Activated CD4-positive, alpha-beta T cell treated with anti-CD3 and anti-CD28 coated beads for 36 hours (primary cell): ENCODE measurements at regions of chr11 and their contacts with region 1.

Region 1: DNA sequence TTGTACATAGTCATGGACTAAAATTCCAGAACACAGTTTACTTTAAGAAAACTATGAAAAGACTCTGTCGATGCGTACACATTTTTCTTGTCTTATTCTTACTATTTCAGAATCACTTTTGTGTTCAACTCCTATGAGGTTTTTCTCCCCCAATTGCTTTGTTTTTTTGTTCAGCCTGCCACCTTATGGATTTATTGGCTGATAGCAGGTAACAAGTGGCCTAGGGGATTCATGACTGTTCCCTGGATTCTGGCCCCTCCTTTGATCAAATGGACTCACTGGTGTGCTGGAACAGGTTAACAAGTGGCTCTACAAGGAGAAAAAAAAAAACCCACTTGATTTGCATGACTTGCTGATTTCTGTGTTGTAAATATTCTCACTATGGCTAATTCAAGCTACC is 10.6 kb downstream of the MMP20 start:
- DNase-seq: no peak
- ATAC-seq: no peak
- H3K4me3 Mint-ChIP-seq: no peak overlapping the region
- H3K27ac Mint-ChIP-seq: no peak overlapping the region
- H3K4me1 Mint-ChIP-seq: peaks cover 13% of the 10 kb centered on the region
- H3K27me3 Mint-ChIP-seq: no peaks in the 10 kb centered on the region

Region 2: GRCh38 chr11:101436511-101437142 is 1177.9 kb before region 1 on chr11:
- CTCF ChIA-PET with region 1: no interaction called
- POLR2A ChIA-PET with region 1: no interaction called
- intact Hi-C with region 1: no loop called
- DNase-seq: peak; percentile 39
- ATAC-seq: no peak
- H3K4me3 Mint-ChIP-seq: no peak overlapping the region
- H3K27ac Mint-ChIP-seq: no peak overlapping the region
- H3K4me1 Mint-ChIP-seq: no peaks in the 10 kb centered on the region
- H3K27me3 Mint-ChIP-seq: no peaks in the 10 kb centered on the region

Region 3: DNA sequence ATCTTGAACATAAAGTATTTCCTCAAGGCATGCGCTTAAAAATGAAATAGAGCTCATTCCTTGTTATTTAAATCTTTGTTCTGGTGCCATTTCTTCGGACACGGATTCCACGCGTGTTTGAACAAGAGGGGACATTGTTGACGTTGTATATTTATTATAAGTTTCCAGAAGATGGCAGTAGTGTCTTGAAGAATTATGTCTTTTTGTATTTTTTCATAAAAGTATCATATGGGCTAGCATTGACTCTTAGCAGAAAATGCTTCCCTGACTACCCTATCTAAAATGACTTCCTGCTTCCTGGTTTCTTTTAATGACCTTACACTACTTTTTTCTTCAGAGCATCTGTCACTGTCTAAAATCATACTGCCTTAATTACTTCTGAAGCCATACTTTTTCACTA is 247.1 kb before region 1 on chr11:
- CTCF ChIA-PET with region 1: interaction called, 10 read pairs
- POLR2A ChIA-PET with region 1: no interaction called
- intact Hi-C with region 1: loop called in 1 of 2 experiments (anchors 1 kb)
- DNase-seq: no peak
- ATAC-seq: peak; percentile 50
- H3K4me3 Mint-ChIP-seq: no peak overlapping the region
- H3K27ac Mint-ChIP-seq: no peak overlapping the region
- H3K4me1 Mint-ChIP-seq: peaks cover 27% of the 10 kb centered on the region
- H3K27me3 Mint-ChIP-seq: no peaks in the 10 kb centered on the region

Region 4: DNA sequence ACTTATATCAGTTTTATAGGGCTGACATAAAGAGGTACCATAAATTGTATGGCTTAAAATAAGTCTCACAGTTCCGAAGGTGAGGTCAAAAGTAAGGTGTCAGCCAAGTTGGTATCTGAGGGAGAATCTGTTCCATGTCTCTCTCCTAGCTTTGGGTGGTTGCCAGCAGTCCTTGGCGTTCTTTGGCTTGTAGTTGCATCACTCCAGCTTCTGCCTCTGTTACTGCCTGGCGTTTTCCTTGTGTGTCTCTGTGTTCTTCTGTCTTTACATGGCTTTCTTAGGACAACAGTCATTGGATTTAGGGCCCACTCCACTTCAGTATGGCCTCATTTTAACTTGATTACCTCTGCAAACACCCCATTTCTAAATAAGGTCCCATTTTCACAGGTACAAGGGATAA is 100.6 kb before region 1 on chr11:
- CTCF ChIA-PET with region 1: interaction called, 12 read pairs
- POLR2A ChIA-PET with region 1: no interaction called
- intact Hi-C with region 1: no loop called
- DNase-seq: no peak
- ATAC-seq: no peak
- H3K4me3 Mint-ChIP-seq: no peak overlapping the region
- H3K27ac Mint-ChIP-seq: no peak overlapping the region
- H3K4me1 Mint-ChIP-seq: no peaks in the 10 kb centered on the region
- H3K27me3 Mint-ChIP-seq: peaks cover 2% of the 10 kb centered on the region

Region 5: GRCh38 chr11:102599642-102600261 is 14.7 kb before region 1 on chr11:
- CTCF ChIA-PET with region 1: interaction called, 22 read pairs
- POLR2A ChIA-PET with region 1: no interaction called
- intact Hi-C with region 1: no loop called
- DNase-seq: no peak
- ATAC-seq: peak; percentile 96
- H3K4me3 Mint-ChIP-seq: no peak overlapping the region
- H3K27ac Mint-ChIP-seq: peak overlapping the region; percentile 75
- H3K4me1 Mint-ChIP-seq: peaks cover 28% of the 10 kb centered on the region
- H3K27me3 Mint-ChIP-seq: no peaks in the 10 kb centered on the region

Region 6: GRCh38 chr11:102666331-102666957 is 52.0 kb after region 1 on chr11:
- CTCF ChIA-PET with region 1: interaction called, 31 read pairs
- POLR2A ChIA-PET with region 1: no interaction called
- intact Hi-C with region 1: no loop called
- DNase-seq: peak; percentile 37
- ATAC-seq: peak; percentile 64
- H3K4me3 Mint-ChIP-seq: no peak overlapping the region
- H3K27ac Mint-ChIP-seq: no peak overlapping the region
- H3K4me1 Mint-ChIP-seq: no peaks in the 10 kb centered on the region
- H3K27me3 Mint-ChIP-seq: peaks cover 2% of the 10 kb centered on the region